ENCODE measurements at regions of chr15 and their contacts with region 1.

Region 1: GRCh38 chr15:59741274-59741906 is 52.3 kb upstream of the BNIP2 start:
- H3K4me3 ChIP-seq: no peak overlapping the region
- H3K27ac ChIP-seq: no peak overlapping the region
- H3K4me1 ChIP-seq: peaks cover 4% of the 10 kb centered on the region
- CTCF ChIP-seq: peak; percentile 43

Region 2: GRCh38 chr15:59725172-59725486 is 16.3 kb before region 1 on chr15:
- CTCF ChIA-PET with region 1: interaction called, 10 read pairs
- POLR2A ChIA-PET with region 1: no interaction called
- H3K4me3 ChIP-seq: no peak overlapping the region
- H3K27ac ChIP-seq: no peak overlapping the region
- H3K4me1 ChIP-seq: no peaks in the 10 kb centered on the region
- CTCF ChIP-seq: no peak

Region 3: GRCh38 chr15:59762558-59762957 is 21.2 kb after region 1 on chr15:
- CTCF ChIA-PET with region 1: interaction called, 11 read pairs
- POLR2A ChIA-PET with region 1: no interaction called
- H3K4me3 ChIP-seq: no peak overlapping the region
- H3K27ac ChIP-seq: no peak overlapping the region
- H3K4me1 ChIP-seq: no peaks in the 10 kb centered on the region
- CTCF ChIP-seq: no peak

Measured in HEK293 (cell line).